Dorsolateral prefrontal cortex (tissue), 120 donors: ENCODE measurements at regions of chr1 and their contacts with region 1.

Region 1: GRCh38 chr1:203795441-203796235 is at the starts of genes ZBED6 and ZC3H11A:
- DNase-seq: peak; percentile 98 to 100 (median 99)
- H3K4me3 ChIP-seq: peak within 1 kb of the TSS; percentile 55 to 97 (median 80)
- H3K27ac ChIP-seq: peak within 1 kb of the TSS; percentile 72 to 99 (median 96)
- H3K27me3 ChIP-seq: no peaks in the 10 kb centered on the region
- CTCF ChIP-seq: peak in 27 of 56 donors; percentile 3 to 52 (median 18)
- total RNA-seq, gene ZBED6: 16.5 to 57.6 (median 29.2) TPM
- total RNA-seq, gene ZC3H11A: 51.9 to 91.9 (median 71.8) TPM

Region 2: DNA sequence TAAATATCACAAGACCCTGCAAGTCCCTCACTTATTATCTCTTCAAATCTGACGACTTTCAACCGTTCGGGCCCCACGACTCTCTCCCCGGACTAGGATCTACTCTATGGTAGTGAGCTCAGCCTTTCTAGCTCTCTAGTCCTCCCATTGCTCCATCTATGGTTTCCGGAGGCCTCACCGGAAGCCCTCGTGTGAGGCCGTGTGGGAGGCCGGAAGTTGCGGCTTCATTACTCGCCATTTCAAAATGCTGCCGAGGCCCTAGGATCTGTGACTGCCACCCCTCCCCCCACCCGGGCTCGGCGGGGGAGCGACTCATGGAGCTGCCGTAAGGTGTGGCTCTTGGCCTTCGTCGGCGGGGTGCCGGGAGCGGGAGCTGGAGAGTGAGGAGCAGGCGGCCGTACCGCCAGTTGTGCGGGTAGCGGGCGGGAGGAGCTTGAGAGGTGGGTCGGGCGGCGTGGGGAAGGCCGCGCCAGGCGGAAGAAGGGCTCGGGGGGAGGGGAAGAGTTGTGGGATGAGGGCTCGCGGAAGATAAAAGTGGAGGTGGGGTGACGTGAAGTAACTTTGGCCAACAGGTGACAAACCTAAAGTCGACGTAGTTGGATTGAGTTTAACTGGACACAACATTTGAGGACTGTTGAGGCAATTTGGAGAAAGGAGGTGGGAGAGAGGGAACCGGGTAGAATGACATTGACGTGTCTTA is 720.7 kb after region 1 on chr1 and contains the start of gene MDM4:
- intact Hi-C with region 1: loop called in 1 of 2 experiments (anchors 5 kb)
- DNase-seq: peak; percentile 70 to 93 (median 90)
- H3K4me3 ChIP-seq: peak within 1 kb of the TSS; percentile 55 to 97 (median 85)
- H3K27ac ChIP-seq: peak within 1 kb of the TSS; percentile 82 to 98 (median 94)
- H3K27me3 ChIP-seq: no peaks in the 10 kb centered on the region
- CTCF ChIP-seq: peak in 36 of 56 donors; percentile 7 to 51 (median 27)
- total RNA-seq, gene MDM4: 56.3 to 151 (median 97.1) TPM